CD4-positive, alpha-beta memory T cell (primary cell): ENCODE measurements at regions of chr7 and their contacts with region 1.

Region 1: DNA sequence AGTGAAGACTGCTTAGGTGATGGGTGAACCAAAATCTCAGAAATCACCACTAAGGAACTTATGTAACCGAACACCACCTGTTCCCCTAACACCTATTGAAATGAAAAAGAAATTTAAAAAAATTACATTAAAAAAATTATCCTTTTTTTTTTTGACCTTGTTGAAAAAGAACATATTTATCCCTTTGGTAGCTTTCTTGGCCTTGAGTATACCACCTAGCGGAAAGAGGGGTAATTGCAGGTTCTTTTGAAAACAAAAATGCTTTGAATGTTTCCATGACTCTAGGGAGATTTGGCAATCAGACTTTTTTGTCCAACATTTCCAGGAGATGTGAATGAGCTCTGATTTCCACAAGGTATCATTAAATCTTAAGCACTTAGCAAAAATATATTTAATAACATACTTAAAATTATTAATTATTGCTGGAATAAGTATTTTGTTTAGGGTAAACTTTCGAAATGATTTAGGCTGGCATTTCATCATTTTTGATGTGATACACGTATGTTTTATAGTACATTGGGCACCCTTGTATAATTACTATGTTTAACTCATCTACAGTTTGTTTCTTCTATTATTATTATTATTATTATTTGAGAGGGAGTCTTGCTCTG is 47.0 kb upstream of the ELMO1 start:
- DNase-seq: peak in 4 of 5 donors; percentile 25 to 43 (median 38)
- H3K4me3 ChIP-seq: no peak overlapping the region
- H3K4me3 Mint-ChIP-seq: no peak overlapping the region
- H3K27ac ChIP-seq: no peak overlapping the region
- H3K27ac Mint-ChIP-seq: no peak overlapping the region
- H3K4me1 ChIP-seq: no peaks in the 10 kb centered on the region
- H3K4me1 Mint-ChIP-seq: no peaks in the 10 kb centered on the region
- H3K27me3 ChIP-seq: no peaks in the 10 kb centered on the region
- H3K27me3 Mint-ChIP-seq: no peaks in the 10 kb centered on the region

Region 2: DNA sequence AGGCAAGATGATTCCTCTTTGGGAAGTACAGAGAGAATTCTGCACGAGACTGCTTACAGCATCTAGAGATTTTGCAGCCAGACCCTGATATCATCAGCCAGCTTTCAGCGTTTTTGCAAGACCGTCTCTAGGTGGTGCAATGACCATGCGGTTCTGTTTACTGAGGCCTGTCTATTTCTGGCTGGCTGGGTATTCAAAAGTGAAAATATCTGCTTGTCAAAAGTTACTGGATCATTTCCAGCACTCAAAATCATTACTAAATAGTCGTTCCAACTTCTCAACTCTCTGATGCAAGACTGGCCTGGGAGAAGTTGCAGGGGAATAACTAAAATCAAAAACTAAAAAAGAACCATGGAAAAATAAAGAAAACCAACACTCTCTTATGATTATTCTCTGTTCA is 287.2 kb before region 1 on chr7:
- CTCF ChIA-PET with region 1: interaction called, 11 read pairs
- POLR2A ChIA-PET with region 1: interaction called, 3 read pairs
- intact Hi-C with region 1: loop called (anchors 1 kb)
- DNase-seq: peak in 4 of 5 donors; percentile 15 to 38 (median 32)
- H3K4me3 ChIP-seq: no peak overlapping the region
- H3K4me3 Mint-ChIP-seq: no peak overlapping the region
- H3K27ac ChIP-seq: no peak overlapping the region
- H3K27ac Mint-ChIP-seq: peak overlapping the region; percentile 22 to 84 (median 64)
- H3K4me1 ChIP-seq: no peaks in the 10 kb centered on the region
- H3K4me1 Mint-ChIP-seq: peaks cover 0 to 3% (median under 1%) of the 10 kb centered on the region in 4 donors
- H3K27me3 ChIP-seq: no peaks in the 10 kb centered on the region
- H3K27me3 Mint-ChIP-seq: no peaks in the 10 kb centered on the region

Region 3: GRCh38 chr7:37234928-37235327 is 260.8 kb before region 1 on chr7:
- CTCF ChIA-PET with region 1: interaction called, 61 read pairs
- POLR2A ChIA-PET with region 1: no interaction called
- intact Hi-C with region 1: loop called (anchors 1 kb)
- DNase-seq: peak; percentile 11 to 39 (median 24)
- H3K4me3 ChIP-seq: no peak overlapping the region
- H3K4me3 Mint-ChIP-seq: no peak overlapping the region
- H3K27ac ChIP-seq: no peak overlapping the region
- H3K27ac Mint-ChIP-seq: peak overlapping the region in 3 of 7 donors; percentile 37 to 77 (median 51)
- H3K4me1 ChIP-seq: peaks cover 16% of the 10 kb centered on the region
- H3K4me1 Mint-ChIP-seq: peaks cover 23 to 33% (median 28%) of the 10 kb centered on the region in 4 donors
- H3K27me3 ChIP-seq: no peaks in the 10 kb centered on the region
- H3K27me3 Mint-ChIP-seq: no peaks in the 10 kb centered on the region

Region 4: GRCh38 chr7:37269711-37270508 is 225.8 kb before region 1 on chr7:
- CTCF ChIA-PET with region 1: interaction called, 11 read pairs
- POLR2A ChIA-PET with region 1: no interaction called
- intact Hi-C with region 1: no loop called
- DNase-seq: no peak
- H3K4me3 ChIP-seq: no peak overlapping the region
- H3K4me3 Mint-ChIP-seq: no peak overlapping the region
- H3K27ac ChIP-seq: no peak overlapping the region
- H3K27ac Mint-ChIP-seq: no peak overlapping the region
- H3K4me1 ChIP-seq: peaks cover 20% of the 10 kb centered on the region
- H3K4me1 Mint-ChIP-seq: peaks cover 28 to 42% (median 36%) of the 10 kb centered on the region in 4 donors
- H3K27me3 ChIP-seq: no peaks in the 10 kb centered on the region
- H3K27me3 Mint-ChIP-seq: no peaks in the 10 kb centered on the region

Region 5: DNA sequence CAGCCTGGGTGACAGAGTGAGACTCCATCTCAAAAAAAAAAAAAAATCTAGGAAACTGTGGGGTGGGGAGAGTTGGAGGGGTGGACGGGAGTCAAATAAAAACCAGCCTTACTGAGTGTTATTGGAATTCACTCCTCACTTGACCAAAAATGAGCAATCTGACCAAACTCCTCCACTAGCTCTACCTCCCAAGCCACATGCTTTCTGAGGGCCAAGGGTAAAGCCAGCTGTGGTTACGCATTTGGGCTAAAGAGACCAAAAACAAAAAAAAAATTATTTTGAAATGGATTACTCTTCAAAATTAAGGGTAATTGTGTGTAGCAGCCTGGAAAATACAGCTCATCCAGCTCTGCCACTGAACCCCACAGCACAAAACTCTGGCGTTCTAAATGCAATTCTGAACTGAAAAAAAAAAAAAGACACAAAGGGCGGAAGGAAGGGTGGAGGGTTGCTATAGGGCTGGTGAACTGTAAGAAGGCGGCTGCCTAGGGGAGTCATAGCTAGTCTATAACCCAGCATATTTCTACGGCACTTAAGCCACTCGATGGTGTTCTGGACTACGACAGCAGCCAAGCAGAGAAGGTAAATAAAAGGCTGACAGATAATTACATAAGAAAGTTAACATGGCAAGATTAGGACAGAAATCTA is 54.8 kb before region 1 on chr7:
- CTCF ChIA-PET with region 1: interaction called, 13 read pairs
- POLR2A ChIA-PET with region 1: no interaction called
- intact Hi-C with region 1: no loop called
- DNase-seq: peak; percentile 35 to 48 (median 41)
- H3K4me3 ChIP-seq: peak overlapping the region; percentile 4 to 33
- H3K4me3 Mint-ChIP-seq: peak overlapping the region; percentile 63 to 89 (median 82)
- H3K27ac ChIP-seq: peak overlapping the region; percentile 33
- H3K27ac Mint-ChIP-seq: peak overlapping the region; percentile 88 to 98 (median 95)
- H3K4me1 ChIP-seq: peaks cover 79% of the 10 kb centered on the region
- H3K4me1 Mint-ChIP-seq: peaks cover 64 to 84% (median 72%) of the 10 kb centered on the region in 4 donors
- H3K27me3 ChIP-seq: no peaks in the 10 kb centered on the region
- H3K27me3 Mint-ChIP-seq: no peaks in the 10 kb centered on the region

Region 6: DNA sequence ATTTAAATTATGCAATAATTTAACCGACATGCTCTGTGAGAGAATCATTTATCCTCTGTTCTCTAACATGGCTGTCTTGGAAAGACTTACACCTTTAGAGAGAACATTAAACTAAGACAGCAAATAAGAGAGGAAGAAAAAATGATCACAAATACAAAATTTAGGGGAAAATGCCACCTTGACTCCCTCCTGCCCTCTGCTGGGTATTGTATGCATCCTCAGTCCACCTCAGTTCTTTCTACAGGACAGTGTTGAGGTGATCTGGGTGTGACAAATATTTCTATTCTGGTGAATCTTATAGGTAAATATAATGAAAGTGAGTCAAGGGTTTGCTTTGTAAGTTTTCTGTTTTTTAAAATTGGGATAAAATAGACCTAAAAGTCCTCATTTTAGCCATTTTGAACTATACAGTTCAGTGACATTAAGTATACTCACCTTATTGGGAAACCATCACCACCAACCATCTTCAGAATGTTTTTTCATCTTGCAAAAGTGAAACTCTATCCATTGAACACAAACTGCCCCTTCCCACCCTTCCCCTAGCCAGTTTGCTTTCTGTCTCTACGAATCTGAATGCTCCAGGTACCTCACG is 14.5 kb after region 1 on chr7:
- CTCF ChIA-PET with region 1: interaction called, 45 read pairs
- POLR2A ChIA-PET with region 1: no interaction called
- intact Hi-C with region 1: no loop called
- DNase-seq: peak in 4 of 5 donors; percentile 17 to 33 (median 31)
- H3K4me3 ChIP-seq: no peak overlapping the region
- H3K4me3 Mint-ChIP-seq: no peak overlapping the region
- H3K27ac ChIP-seq: no peak overlapping the region
- H3K27ac Mint-ChIP-seq: no peak overlapping the region
- H3K4me1 ChIP-seq: no peaks in the 10 kb centered on the region
- H3K4me1 Mint-ChIP-seq: no peaks in the 10 kb centered on the region
- H3K27me3 ChIP-seq: no peaks in the 10 kb centered on the region
- H3K27me3 Mint-ChIP-seq: peaks cover 12 to 20% of the 10 kb centered on the region in 2 donors

Region 7: GRCh38 chr7:37694175-37694779 is 198.6 kb after region 1 on chr7:
- CTCF ChIA-PET with region 1: no interaction called
- POLR2A ChIA-PET with region 1: no interaction called
- intact Hi-C with region 1: no loop called
- DNase-seq: no peak
- H3K4me3 ChIP-seq: no peak overlapping the region
- H3K4me3 Mint-ChIP-seq: no peak overlapping the region
- H3K27ac ChIP-seq: no peak overlapping the region
- H3K27ac Mint-ChIP-seq: no peak overlapping the region
- H3K4me1 ChIP-seq: no peaks in the 10 kb centered on the region
- H3K4me1 Mint-ChIP-seq: no peaks in the 10 kb centered on the region
- H3K27me3 ChIP-seq: no peaks in the 10 kb centered on the region
- H3K27me3 Mint-ChIP-seq: peaks cover 0 to 6% of the 10 kb centered on the region in 2 donors